GM10248 (cell line): ENCODE measurements at regions of chr12 and their contacts with region 1.

Region 1: DNA sequence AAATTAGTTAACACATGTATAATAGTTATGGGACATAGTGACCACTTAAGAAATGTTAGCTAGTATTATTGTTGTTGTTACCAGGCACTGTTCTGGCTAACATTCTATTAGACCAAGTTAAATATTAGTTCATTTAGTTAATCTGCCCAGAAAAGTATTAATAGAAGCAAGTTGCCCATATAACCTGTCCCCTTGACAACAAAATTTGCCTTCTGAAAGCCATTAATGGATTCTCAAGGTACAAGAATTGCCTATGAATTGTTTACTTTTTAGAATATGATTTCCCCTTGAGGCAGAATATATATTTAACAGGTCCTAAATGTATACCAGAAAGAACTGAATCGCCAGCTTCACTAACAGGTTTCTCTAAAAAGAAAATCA is 167.3 kb upstream of the TMCC3 start:
- DNase-seq: no peak
- CTCF ChIP-seq: no peak

Region 2: GRCh38 chr12:94575645-94576403 is 241.9 kb before region 1 on chr12:
- CTCF ChIA-PET with region 1: no interaction called
- POLR2A ChIA-PET with region 1: no interaction called
- DNase-seq: no peak
- CTCF ChIP-seq: no peak

Region 3: DNA sequence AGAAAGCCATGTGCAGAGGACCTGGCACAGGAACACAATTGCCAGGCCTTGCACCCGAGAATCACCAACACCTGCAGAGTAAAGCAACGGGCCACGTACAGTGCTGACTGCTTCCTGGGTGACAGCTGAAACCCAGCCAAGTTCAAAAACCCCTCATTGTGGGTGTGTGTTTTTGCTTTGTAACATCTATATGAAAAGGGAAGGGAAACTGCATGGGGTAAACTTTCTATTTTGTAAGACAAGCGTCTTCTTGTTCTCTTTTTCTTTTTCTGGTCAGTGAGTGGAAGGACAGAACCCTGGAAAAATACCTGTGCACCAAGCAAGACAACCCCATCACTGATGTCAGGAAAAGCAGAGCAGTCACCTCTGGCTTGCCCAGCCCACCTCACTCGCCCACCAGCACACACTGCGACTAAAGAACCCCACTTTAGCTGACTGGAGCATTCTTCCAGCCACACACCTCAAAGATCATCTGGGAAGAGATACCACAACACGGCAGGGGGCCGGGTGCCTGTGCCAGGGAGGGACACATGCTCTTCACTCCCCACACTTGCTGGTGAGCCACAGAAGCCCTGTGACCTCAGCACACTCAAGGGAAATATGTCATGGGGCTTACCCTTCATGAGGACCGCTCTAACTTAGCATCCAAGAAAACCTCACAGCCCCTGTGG is 13.5 kb after region 1 on chr12:
- CTCF ChIA-PET with region 1: interaction called, 16 read pairs
- POLR2A ChIA-PET with region 1: interaction called, 3 read pairs
- DNase-seq: peak; percentile 85
- CTCF ChIP-seq: no peak